Calu3 (cell line): ENCODE measurements at regions of chr17 and their contacts with region 1.

Region 1: GRCh38 chr17:75549221-75550138 is 24.0 kb downstream of the LLGL2 start:
- DNase-seq: peak; percentile 95
- H3K4me3 Mint-ChIP-seq: peak overlapping the region; percentile 56
- H3K27ac Mint-ChIP-seq: peak overlapping the region; percentile 96
- H3K4me1 Mint-ChIP-seq: peaks cover 44% of the 10 kb centered on the region
- H3K27me3 Mint-ChIP-seq: no peaks in the 10 kb centered on the region
- CTCF ChIP-seq: no peak

Region 2: GRCh38 chr17:75105618-75106384 is 443.7 kb before region 1 on chr17:
- CTCF ChIA-PET with region 1: no interaction called
- intact Hi-C with region 1: no loop called
- DNase-seq: peak; percentile 76
- H3K4me3 Mint-ChIP-seq: peak overlapping the region; percentile 20
- H3K27ac Mint-ChIP-seq: peak overlapping the region; percentile 90
- H3K4me1 Mint-ChIP-seq: peaks cover 19% of the 10 kb centered on the region
- H3K27me3 Mint-ChIP-seq: no peaks in the 10 kb centered on the region
- CTCF ChIP-seq: peak; percentile 77

Region 3: GRCh38 chr17:75371339-75371738 is 178.1 kb before region 1 on chr17:
- CTCF ChIA-PET with region 1: no interaction called
- intact Hi-C with region 1: no loop called
- DNase-seq: no peak
- H3K4me3 Mint-ChIP-seq: no peak overlapping the region
- H3K27ac Mint-ChIP-seq: no peak overlapping the region
- H3K4me1 Mint-ChIP-seq: no peaks in the 10 kb centered on the region
- H3K27me3 Mint-ChIP-seq: no peaks in the 10 kb centered on the region
- CTCF ChIP-seq: no peak

Region 4: DNA sequence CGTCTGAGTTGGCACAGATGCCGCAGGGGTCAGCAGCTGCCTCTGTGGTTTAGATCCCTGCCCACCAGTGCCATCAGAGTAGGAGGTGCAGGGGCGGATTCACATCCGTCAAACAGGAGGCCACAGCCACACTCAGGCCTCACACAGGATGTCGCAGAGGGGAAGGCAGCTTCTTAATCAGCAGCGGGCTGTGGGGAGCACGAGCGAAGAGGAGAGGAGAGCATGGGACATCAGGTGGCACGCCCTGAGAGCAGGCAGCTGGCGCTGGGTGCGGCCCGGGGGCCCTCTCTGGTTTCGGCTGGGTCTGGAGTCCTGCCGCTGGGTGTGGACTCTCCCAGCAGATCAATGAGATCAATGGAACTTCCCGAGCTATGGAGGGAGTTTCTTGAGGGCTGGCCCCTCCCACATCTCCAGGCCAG is 14.4 kb before region 1 on chr17:
- CTCF ChIA-PET with region 1: interaction called, 9 read pairs
- intact Hi-C with region 1: loop called (anchors 1 kb)
- DNase-seq: peak; percentile 68
- H3K4me3 Mint-ChIP-seq: peak overlapping the region; percentile 50
- H3K27ac Mint-ChIP-seq: peak overlapping the region; percentile 69
- H3K4me1 Mint-ChIP-seq: peaks cover 52% of the 10 kb centered on the region
- H3K27me3 Mint-ChIP-seq: no peaks in the 10 kb centered on the region
- CTCF ChIP-seq: no peak

Region 5: DNA sequence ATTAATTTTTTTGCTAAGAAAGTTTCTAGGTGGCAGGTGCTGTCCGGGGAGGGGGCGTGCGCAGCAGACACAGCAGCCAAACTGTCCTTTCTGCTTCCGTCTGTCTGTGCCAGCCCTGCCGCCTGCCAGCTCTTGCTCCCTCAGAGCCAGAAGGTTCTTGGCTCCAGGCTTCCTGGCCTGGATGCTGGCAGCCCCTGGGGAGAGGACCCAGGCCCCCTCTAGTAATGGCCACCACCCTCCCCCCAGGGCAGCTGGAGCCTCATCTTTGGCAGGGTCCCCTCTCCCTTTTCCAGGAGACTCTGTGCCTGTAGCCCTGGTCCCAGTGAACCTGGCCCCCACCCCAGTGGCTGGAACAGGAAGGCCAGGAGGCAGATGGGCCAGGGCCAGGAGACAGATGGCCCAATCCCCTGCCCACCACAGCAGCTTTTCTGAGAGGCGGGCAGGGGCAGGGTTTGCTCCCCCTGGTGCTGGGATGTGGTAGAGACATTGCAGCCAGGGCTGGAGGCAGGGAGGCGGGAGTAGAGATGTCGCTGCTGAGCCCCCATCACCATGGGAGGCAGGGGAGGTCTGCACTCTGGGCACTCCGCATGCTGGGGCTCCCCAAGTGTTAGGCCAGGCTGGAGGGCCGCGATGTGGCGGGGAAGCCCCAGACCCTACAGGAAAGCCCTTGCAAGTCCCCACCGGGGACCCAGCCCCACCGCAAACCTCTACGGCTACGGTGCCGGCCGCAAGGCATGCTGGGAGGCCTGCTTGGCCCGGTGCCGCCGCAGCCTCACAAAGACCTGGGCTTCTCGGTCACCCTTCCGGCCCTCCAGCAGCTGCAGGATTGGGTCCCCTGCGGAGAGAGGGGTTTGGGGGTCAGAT is 278.0 kb after region 1 on chr17:
- CTCF ChIA-PET with region 1: no interaction called
- intact Hi-C with region 1: no loop called
- DNase-seq: peak; percentile 57
- H3K4me3 Mint-ChIP-seq: no peak overlapping the region
- H3K27ac Mint-ChIP-seq: no peak overlapping the region
- H3K4me1 Mint-ChIP-seq: peaks cover under 1% of the 10 kb centered on the region
- H3K27me3 Mint-ChIP-seq: no peaks in the 10 kb centered on the region
- CTCF ChIP-seq: peak; percentile 48